Heart right ventricle (tissue), 16 donors: ENCODE measurements at regions of chr17 and their contacts with region 1.

Region 1: GRCh38 chr17:6402258-6402657 is 32.7 kb downstream of the AIPL1 start:
- DNase-seq: no peak
- ATAC-seq: no peak
- H3K4me3 ChIP-seq: no peak overlapping the region
- H3K27ac ChIP-seq: no peak overlapping the region
- H3K4me1 ChIP-seq: no peaks in the 10 kb centered on the region
- H3K27me3 ChIP-seq: peaks cover 0 to 23% (median 7%) of the 10 kb centered on the region in 7 donors
- CTCF ChIP-seq: no peak

Region 2: DNA sequence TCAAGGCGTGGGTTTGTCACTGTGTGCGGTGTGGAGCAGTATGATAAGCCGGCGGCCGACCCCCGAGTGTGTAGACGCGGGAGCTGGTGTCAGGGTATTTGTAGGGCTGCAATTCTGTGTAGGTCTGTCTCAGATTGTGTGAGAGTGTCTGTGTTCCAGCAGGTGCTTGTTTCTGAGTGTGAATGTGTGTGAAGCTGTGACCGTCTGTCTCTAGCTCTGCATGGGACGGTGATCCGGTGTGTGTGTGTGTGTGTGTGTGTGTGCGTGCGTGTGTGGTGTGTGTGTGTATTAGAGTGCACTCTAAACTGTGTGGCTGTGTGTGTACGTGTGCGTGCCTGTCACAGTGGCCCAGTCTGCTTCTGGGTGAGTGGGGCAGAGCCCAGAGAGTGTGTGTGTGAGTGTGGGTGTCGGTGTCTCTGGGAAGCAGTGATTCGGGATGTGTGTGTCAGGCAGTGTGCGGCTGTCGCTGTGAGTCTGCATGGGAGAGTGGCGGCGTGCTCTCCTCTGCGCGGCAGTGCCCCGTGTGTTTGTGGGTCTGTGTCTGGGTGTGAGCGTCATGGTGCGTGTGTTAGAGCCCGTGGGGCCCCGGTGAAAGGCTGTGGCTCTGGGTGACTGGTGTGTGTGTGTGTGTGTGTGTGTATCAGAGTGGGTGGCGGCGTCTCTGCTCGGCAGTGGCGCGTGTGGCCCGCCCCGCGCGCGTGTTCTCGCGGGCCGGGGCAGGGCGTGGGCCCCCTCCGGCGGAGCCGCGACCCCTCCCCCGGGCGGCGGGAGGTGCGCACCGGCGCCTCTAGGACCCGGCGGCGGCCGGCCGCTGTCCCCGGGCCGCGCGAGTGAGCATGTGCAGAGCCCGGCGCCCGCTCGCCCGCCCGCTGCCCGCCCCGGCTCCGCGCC is 332.5 kb before region 1 on chr17 and contains the start of gene WSCD1:
- intact Hi-C with region 1: loop called in 1 of 10 experiments (anchors 10 kb)
- DNase-seq: peak in 1 of 2 donors; percentile 42
- ATAC-seq: peak; percentile 27 to 81 (median 66)
- H3K4me3 ChIP-seq: peak within 1 kb of the TSS; percentile 38 to 81 (median 63)
- H3K27ac ChIP-seq: peak within 1 kb of the TSS in 5 of 10 donors; percentile 12 to 64 (median 44)
- H3K4me1 ChIP-seq: peaks cover 0 to 12% (median 7%) of the 10 kb centered on the region in 9 donors
- H3K27me3 ChIP-seq: peaks cover 0 to 52% (median 32%) of the 10 kb centered on the region in 7 donors
- CTCF ChIP-seq: no peak
- total RNA-seq, gene WSCD1: 3.4 to 13.8 (median 4.2) TPM